Mammary epithelial cell (primary cell): ENCODE measurements at regions of chr2 and their contacts with region 1.

Region 1: GRCh38 chr2:119126650-119127049 is 31.9 kb downstream of the C1QL2 start:
- DNase-seq: peak; percentile 32
- H3K4me3 ChIP-seq: no peak overlapping the region
- H3K27ac ChIP-seq: no peak overlapping the region
- H3K4me1 ChIP-seq: no peaks in the 10 kb centered on the region
- H3K27me3 ChIP-seq: no peaks in the 10 kb centered on the region
- CTCF ChIP-seq: peak; percentile 40 to 72

Region 2: GRCh38 chr2:119066272-119066804 is 60.3 kb before region 1 on chr2:
- CTCF ChIA-PET with region 1: no interaction called
- dilution Hi-C with region 1: loop called (anchors 5 kb)
- in situ Hi-C with region 1: no loop called
- intact Hi-C with region 1: no loop called
- DNase-seq: peak; percentile 64
- H3K4me3 ChIP-seq: no peak overlapping the region
- H3K27ac ChIP-seq: no peak overlapping the region
- H3K4me1 ChIP-seq: no peaks in the 10 kb centered on the region
- H3K27me3 ChIP-seq: no peaks in the 10 kb centered on the region
- CTCF ChIP-seq: no peak